Activated naive CD4-positive, alpha-beta T cell treated with anti-CD3 and anti-CD28 coated beads, Interleukin-2, amount 10 ng/mL, durations not matched to agents 7 days and 5 days (primary cell): ENCODE measurements at regions of chr5 and their contacts with region 1.

Region 1: DNA sequence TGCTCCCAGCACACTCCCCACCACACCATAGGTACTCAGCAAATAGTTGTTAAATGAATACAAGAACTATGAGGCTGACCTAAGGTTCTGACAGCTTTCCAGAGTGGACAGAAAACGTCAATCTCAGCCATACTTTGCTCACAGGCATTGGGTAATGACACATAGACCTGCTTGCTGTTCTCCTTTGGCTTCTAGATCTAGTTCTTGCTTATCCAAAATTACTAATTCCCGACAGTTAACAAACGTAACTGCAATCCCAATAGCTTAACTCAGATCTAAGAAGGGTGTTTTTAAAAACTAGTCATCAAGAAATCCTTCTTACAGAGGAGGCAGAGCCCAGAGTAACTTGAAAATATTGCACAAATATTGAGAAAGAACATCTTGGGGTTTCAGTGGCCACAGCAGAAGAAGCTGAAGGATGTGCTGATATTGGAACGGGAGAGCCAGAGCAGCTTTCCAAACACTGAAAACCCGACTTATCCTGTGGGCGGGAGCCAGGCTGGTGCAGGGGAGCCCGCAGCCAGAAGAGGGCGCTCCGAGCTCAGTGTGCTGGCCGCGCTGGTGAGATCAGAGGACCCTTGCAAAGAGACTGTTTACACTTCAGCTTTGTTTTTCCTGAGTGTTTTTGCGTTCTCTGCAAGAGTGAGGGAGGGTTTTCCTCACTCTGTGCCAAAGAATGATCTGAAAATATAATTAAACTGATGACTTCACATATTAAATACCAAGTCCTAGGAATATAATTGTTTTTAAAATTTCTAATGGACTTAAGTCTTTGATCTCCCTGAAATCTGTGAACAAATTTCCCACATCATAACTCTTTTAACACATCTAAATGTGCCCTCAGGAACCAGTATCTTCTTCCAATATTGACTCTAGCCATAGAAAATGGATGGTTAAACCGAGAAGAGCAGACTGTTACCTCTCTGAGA is 30.3 kb downstream of the FGF1 start:
- DNase-seq: peak; percentile 76
- H3K4me3 Mint-ChIP-seq: no peak overlapping the region
- H3K27ac Mint-ChIP-seq: no peak overlapping the region
- H3K4me1 Mint-ChIP-seq: no peaks in the 10 kb centered on the region
- H3K27me3 Mint-ChIP-seq: peaks cover 34% of the 10 kb centered on the region

Region 2: DNA sequence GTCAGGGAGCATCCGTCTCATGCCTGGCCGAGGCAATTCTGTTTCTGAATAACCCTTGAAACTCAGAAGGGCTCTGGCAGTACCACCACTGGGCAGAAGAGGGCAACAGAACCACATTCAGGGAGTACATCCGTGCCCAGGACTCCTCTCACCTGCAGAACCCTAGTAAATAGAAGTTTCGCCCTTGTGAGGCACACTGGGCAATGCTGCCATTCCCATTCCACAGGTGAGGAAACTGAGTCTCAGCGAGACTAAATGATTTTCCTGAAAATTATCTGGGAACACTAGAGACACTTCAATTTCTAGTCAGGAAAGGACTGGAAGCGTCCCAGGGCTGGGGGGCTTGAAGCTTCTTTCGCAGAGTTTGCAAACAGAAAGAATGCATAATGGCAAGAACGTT is 44.4 kb before region 1 on chr5:
- CTCF ChIA-PET with region 1: interaction called, 14 read pairs
- DNase-seq: peak; percentile 80
- H3K4me3 Mint-ChIP-seq: no peak overlapping the region
- H3K27ac Mint-ChIP-seq: no peak overlapping the region
- H3K4me1 Mint-ChIP-seq: no peaks in the 10 kb centered on the region
- H3K27me3 Mint-ChIP-seq: peaks cover 16% of the 10 kb centered on the region

Region 3: GRCh38 chr5:142644640-142645361 is 10.8 kb before region 1 on chr5:
- CTCF ChIA-PET with region 1: interaction called, 24 read pairs
- DNase-seq: no peak
- H3K4me3 Mint-ChIP-seq: no peak overlapping the region
- H3K27ac Mint-ChIP-seq: no peak overlapping the region
- H3K4me1 Mint-ChIP-seq: no peaks in the 10 kb centered on the region
- H3K27me3 Mint-ChIP-seq: peaks cover 18% of the 10 kb centered on the region